AG04450 (cell line): ENCODE measurements at regions of chr10 and their contacts with region 1.

Region 1: GRCh38 chr10:29304264-29305030 is 15.6 kb downstream of the LYZL1 start:
- DNase-seq: peak; percentile 45
- H3K4me3 ChIP-seq: no peak overlapping the region
- H3K27ac ChIP-seq: no peak overlapping the region
- H3K27me3 ChIP-seq: no peaks in the 10 kb centered on the region
- CTCF ChIP-seq: peak; percentile 81

Region 2: DNA sequence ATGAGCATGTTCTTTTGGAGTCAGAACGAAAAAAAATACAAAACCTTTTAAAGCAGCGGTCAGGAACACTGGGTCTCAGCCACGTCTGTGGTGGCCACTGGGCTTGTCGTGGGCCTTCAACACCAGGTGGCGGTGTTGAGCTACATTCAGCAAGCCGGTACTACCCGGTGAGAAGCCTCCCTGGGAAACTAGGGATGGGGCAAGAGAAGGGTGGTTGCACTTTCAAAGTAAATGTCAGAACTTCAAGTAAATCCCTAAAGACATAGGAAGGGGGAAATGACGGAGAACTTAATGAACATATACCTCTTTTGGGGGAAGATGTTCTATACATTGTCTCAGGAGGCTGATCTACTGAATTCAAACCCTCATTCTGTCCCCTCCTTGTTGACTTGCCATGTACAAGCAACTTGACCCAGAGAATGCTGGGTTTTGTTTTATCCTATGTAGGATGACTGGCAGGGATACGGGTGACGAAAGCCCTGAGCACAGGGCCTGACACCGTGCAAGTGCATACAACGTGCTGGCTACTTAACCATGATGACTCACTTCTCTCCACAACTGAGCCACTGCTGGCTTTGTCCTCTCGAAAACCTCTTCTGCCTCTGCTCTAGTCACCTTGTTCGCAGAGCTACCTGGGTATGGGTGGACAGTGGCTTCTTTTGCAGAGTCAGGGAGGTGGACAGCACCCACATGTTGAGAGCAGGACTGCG is 676.1 kb before region 1 on chr10:
- CTCF ChIA-PET with region 1: interaction called, 40 read pairs
- POLR2A ChIA-PET with region 1: no interaction called
- DNase-seq: peak; percentile 44
- H3K4me3 ChIP-seq: no peak overlapping the region
- H3K27ac ChIP-seq: no peak overlapping the region
- H3K27me3 ChIP-seq: peaks cover 13% of the 10 kb centered on the region
- CTCF ChIP-seq: peak; percentile 97

Region 3: DNA sequence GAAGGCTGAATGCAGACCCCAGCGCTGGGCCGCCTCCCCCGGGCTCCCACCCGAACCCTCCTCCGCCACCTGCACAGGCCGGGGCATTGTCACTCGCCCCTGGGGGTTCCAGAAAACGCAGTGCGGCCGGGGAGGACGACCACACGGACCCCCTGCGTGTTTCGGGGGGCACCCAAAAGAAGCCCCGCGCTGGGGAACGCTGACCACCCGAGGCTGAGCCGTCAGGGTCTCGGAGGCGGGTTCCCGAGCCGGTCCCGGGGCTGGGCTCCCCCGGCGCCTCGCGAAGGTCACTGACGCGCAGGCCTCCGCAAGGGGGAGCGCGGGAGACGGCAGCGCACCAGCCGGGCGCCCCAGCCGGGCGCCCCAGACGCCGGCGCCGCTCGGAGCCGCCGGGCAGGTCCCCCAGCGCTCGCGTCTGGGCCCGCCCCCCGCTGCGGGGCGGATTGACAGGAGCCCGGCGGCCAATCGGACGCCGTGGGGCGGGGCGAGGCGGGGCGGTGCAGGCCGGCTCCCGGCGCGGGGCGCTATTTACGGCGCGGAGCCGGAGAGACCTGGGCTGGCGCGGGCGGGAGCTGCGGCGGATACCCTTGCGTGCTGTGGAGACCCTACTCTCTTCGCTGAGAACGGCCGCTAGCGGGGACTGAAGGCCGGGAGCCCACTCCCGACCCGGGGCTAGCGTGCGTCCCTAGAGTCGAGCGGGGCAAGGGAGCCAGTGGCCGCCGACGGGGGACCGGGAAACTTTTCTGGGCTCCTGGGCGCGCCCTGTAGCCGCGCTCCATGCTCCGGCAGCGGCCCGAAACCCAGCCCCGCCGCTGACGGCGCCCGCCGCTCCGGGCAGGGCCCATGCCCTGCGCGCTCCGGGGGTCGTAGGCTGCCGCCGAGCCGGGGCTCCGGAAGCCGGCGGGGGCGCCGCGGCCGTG is 627.2 kb before region 1 on chr10 and contains the start of gene BAMBI:
- CTCF ChIA-PET with region 1: interaction called, 12 read pairs
- POLR2A ChIA-PET with region 1: interaction called, 3 read pairs
- DNase-seq: peak; percentile 72
- H3K4me3 ChIP-seq: peak within 1 kb of the TSS; percentile 79
- H3K27ac ChIP-seq: no peak within 1 kb of the TSS
- H3K27me3 ChIP-seq: peaks cover 33% of the 10 kb centered on the region
- CTCF ChIP-seq: peak; percentile 60
- polyA plus RNA-seq, gene BAMBI: 10.8 and 11.0 TPM in 2 replicates

Region 4: DNA sequence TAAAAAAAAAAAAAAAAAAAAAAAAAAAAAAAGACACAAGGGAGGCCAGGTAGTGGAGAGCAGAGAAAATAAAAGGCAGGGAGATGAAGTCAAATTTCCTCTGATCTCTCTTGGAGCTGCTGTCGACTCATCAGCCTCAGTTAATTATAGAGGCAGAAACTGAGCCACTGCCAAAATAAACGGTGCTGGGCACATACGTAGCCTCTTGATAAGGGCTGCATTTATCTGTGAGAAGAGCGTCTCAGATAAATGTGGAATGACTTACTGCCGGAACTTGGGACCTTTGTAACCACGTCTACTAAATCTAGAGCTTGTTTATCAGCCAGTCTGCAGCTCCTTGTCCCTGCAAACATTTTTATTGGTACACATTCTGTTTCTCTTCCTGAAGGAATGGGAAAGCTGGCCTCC is 464.8 kb before region 1 on chr10:
- CTCF ChIA-PET with region 1: interaction called, 10 read pairs
- POLR2A ChIA-PET with region 1: no interaction called
- DNase-seq: no peak
- H3K4me3 ChIP-seq: no peak overlapping the region
- H3K27ac ChIP-seq: no peak overlapping the region
- H3K27me3 ChIP-seq: no peaks in the 10 kb centered on the region
- CTCF ChIP-seq: no peak

Region 5: DNA sequence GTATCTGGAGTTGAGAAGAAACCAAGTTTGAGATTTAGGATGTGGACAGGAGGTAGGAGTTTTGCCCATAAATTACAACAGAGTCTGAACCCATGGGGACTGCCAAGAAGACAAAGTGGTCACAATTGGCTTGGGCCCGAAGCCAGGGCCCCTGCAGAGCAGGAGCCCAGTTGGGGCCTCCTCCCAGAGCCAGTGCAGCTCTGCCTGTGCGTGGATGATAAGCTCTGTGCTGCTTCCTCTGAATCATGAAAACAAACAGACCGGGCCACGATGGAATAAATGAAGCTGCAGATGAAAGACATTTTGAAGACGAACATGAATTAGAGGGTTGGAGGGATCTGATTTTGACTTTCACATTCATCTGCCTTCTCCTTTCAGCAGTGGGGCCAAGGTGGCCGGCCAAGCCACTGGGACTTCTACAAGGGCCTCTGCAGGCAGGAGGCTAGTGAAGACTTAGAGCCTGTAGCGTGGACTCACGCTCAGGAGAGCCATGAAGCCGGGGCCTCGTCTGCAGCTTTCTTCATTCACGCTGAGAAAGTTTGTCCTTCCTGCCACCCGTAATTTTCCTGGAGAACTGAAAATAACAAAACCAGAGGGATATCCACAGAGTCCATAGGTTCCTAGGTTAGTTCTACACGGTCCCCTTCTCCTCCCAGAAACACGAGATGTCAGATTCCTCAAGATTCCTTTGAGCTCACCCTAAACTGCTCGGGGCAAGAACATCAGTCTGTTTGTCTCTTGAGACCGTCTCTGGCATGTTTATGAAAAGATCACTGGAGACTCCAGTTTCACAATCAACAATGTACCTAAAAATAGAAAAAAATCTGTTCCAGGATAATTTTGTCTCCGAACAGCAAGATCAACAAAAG is 172.3 kb before region 1 on chr10:
- CTCF ChIA-PET with region 1: interaction called, 18 read pairs
- POLR2A ChIA-PET with region 1: no interaction called
- DNase-seq: no peak
- H3K4me3 ChIP-seq: no peak overlapping the region
- H3K27ac ChIP-seq: no peak overlapping the region
- H3K27me3 ChIP-seq: no peaks in the 10 kb centered on the region
- CTCF ChIP-seq: no peak

Region 6: GRCh38 chr10:29214551-29214950 is 89.9 kb before region 1 on chr10:
- CTCF ChIA-PET with region 1: no interaction called
- POLR2A ChIA-PET with region 1: no interaction called
- DNase-seq: no peak
- H3K4me3 ChIP-seq: no peak overlapping the region
- H3K27ac ChIP-seq: no peak overlapping the region
- H3K27me3 ChIP-seq: peaks cover 4% of the 10 kb centered on the region
- CTCF ChIP-seq: no peak

Region 7: GRCh38 chr10:29317027-29317420 is 12.6 kb after region 1 on chr10:
- CTCF ChIA-PET with region 1: interaction called, 25 read pairs
- POLR2A ChIA-PET with region 1: no interaction called
- DNase-seq: no peak
- H3K4me3 ChIP-seq: no peak overlapping the region
- H3K27ac ChIP-seq: no peak overlapping the region
- H3K27me3 ChIP-seq: peaks cover 6% of the 10 kb centered on the region
- CTCF ChIP-seq: no peak

Region 8: DNA sequence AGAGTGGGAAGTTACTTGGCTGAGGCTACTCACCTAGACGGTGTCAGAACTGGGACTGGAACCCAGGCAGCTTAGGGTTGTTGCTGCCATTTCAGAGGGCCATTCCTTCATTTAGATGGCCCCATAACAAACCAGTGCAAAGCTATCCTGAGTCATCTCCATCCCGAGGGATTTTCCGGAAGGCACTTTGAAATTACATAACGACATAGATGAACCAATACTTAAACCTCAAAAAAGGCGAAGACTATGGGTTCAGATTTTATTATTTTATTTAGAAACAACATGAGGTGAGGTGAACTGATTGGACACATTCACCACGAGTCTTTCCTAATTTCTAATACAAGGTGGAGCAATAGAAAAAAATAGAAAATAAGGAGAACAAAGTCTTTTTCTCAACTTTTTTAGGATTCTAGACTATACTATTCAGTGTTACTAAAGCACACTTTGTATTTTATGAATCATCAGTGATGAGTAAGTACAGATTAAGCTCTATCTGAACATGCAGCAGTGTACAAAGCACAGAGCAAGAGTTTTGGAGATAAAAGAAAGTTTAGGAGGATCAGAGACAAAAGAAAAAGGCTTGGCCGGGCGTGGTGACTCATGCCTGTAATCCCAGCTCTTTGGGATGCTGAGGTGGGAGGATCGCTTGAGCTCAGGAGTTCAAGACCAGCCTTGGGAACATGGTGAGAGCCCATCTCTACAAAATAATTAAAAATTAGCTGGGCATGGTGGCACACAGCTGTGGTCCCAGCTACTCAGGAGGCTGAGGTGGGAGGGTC is 409.8 kb after region 1 on chr10:
- CTCF ChIA-PET with region 1: no interaction called
- POLR2A ChIA-PET with region 1: no interaction called
- DNase-seq: peak; percentile 61
- H3K4me3 ChIP-seq: no peak overlapping the region
- H3K27ac ChIP-seq: peak overlapping the region; percentile 52
- H3K27me3 ChIP-seq: no peaks in the 10 kb centered on the region
- CTCF ChIP-seq: no peak